ENCODE measurements at regions of chr10 and their contacts with region 1.

Region 1: GRCh38 chr10:102352066-102352715 is 43.3 kb upstream of the NFKB2 start:
- DNase-seq: no peak
- ATAC-seq: peak; percentile 92
- H3K4me3 ChIP-seq: no peak overlapping the region
- H3K27ac ChIP-seq: no peak overlapping the region
- H3K4me1 ChIP-seq: no peaks in the 10 kb centered on the region
- H3K27me3 ChIP-seq: no peaks in the 10 kb centered on the region
- CTCF ChIP-seq: peak; percentile 86 to 95 (median 93)
- EP300 ChIP-seq: no peak
- POLR2A ChIP-seq: no peak
- RAD21 ChIP-seq: peak; percentile 92

Region 2: GRCh38 chr10:102167861-102168260 is 184.3 kb before region 1 on chr10:
- CTCF ChIA-PET with region 1: interaction called, 150 read pairs
- POLR2A ChIA-PET with region 1: interaction called, 4 read pairs
- RAD21 ChIA-PET with region 1: interaction called, 52 read pairs
- SMC1A ChIA-PET with region 1: interaction called, 43 read pairs
- in situ Hi-C with region 1: loop called (anchors 5 kb)
- intact Hi-C with region 1: loop called (anchors 1 kb)
- DNase-seq: no peak
- ATAC-seq: no peak
- H3K4me3 ChIP-seq: no peak overlapping the region
- H3K27ac ChIP-seq: no peak overlapping the region
- H3K4me1 ChIP-seq: peaks cover 4% of the 10 kb centered on the region
- H3K27me3 ChIP-seq: no peaks in the 10 kb centered on the region
- CTCF ChIP-seq: no peak
- EP300 ChIP-seq: no peak
- POLR2A ChIP-seq: no peak
- RAD21 ChIP-seq: no peak

Region 3: DNA sequence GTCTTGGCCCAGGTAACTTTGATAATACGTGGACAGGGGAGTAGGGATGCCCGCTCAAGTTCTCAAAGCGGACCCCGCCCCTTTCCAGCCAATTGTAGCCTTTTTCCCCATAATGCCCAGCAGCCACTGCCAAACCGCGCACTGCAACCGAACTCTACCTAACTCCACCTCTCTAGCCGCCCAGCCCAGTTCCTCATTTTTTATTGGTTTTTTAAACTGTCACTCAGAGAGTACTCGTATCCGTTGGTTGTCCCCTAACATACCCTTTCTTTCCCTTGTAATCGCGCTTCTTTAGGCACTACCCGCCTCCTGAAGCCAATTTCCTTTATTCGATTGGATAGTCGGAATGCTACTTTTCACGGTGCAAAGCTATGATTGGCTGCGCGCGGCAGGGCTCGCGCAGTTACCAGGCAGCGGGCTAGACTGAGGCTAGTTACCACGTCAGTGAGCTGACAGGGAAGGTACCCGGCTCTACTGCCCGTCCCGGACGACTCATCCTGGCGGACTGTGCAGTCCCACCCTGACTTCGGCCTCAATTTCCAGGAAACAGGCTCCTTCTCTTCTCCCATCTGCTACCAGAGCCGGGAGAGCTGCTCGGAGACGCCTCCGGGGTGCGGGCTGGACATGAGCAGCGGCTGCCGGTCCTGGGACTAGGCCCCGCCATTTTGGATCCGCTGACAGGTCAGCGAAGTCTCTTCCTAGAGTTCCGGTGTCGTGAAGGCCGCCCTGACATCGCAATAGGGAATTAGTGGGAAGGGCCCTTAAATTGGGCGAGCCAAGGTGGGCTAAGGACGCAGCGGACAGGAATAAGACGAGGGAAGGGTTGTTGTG is 106.9 kb before region 1 on chr10 and contains the start of gene GBF1:
- CTCF ChIA-PET with region 1: interaction called, 632 read pairs
- POLR2A ChIA-PET with region 1: interaction called, 5 read pairs
- RAD21 ChIA-PET with region 1: interaction called, 14 read pairs
- SMC1A ChIA-PET with region 1: interaction called, 7 read pairs
- in situ Hi-C with region 1: no loop called
- intact Hi-C with region 1: no loop called
- DNase-seq: peak; percentile 100
- ATAC-seq: peak; percentile 94
- H3K4me3 ChIP-seq: peak within 1 kb of the TSS; percentile 86
- H3K27ac ChIP-seq: peak within 1 kb of the TSS; percentile 88
- H3K4me1 ChIP-seq: peaks cover 4% of the 10 kb centered on the region; the same call in 1 of the 2 replicates
- H3K27me3 ChIP-seq: peaks cover 3 to 9% of the 10 kb centered on the region in 2 experiments
- CTCF ChIP-seq: no peak
- EP300 ChIP-seq: 0 out of 4 replicates have a peak, but pooled peaks of 1 of the 2 experiments have one; percentile 13
- POLR2A ChIP-seq: peak; percentile 99
- RAD21 ChIP-seq: no peak
- polyA plus RNA-seq, gene GBF1: 0.82 to 1.2 TPM

Region 4: DNA sequence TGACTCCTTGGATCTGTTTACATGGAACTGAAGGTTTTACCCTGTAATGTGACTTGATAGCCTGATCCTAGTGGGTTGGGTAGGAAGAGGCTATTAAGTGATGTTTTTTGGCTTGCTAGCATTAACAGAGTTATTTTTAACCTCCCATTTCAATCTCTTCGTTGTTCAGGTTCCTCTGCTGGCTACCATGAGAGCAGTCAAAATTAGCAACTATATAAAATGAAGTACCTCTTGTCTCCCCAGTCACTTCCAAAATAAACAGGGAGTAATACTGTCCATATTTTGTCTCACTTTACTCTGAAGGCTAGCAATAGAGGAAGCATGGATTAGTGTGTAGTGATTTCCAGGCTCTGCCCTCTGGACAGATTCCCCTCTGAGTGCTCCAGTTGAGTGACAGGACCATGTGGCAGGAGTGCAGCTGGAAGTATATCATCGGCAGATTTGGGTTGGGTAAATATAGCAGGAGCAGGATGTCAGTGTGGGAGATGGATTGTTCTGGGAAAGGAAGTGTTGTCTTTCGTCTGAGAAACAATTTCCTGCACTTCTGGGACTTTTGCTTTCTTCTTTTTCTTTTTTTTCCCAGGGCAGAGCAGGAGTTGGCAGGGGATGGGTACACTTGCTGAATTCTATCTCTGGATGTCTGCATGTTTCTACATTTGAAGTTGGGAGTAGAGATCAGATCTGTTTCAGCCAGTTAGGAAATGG is 71.6 kb before region 1 on chr10:
- CTCF ChIA-PET with region 1: interaction called, 14 read pairs
- POLR2A ChIA-PET with region 1: no interaction called
- RAD21 ChIA-PET with region 1: no interaction called
- SMC1A ChIA-PET with region 1: interaction called, 4 read pairs
- in situ Hi-C with region 1: no loop called
- intact Hi-C with region 1: no loop called
- DNase-seq: no peak
- ATAC-seq: peak; percentile 44
- H3K4me3 ChIP-seq: peak overlapping the region; percentile 14; the same call in 1 of the 2 replicates
- H3K27ac ChIP-seq: peak overlapping the region; percentile 44
- H3K4me1 ChIP-seq: peaks cover 6% of the 10 kb centered on the region; the same call in 1 of the 2 replicates
- H3K27me3 ChIP-seq: no peaks in the 10 kb centered on the region
- CTCF ChIP-seq: no peak
- EP300 ChIP-seq: no peak
- POLR2A ChIP-seq: no peak
- RAD21 ChIP-seq: no peak

Region 5: GRCh38 chr10:102334101-102334500 is 18.1 kb before region 1 on chr10:
- CTCF ChIA-PET with region 1: interaction called, 37 read pairs
- POLR2A ChIA-PET with region 1: interaction called, 4 read pairs
- RAD21 ChIA-PET with region 1: no interaction called
- SMC1A ChIA-PET with region 1: interaction called, 5 read pairs
- in situ Hi-C with region 1: no loop called
- intact Hi-C with region 1: no loop called
- DNase-seq: no peak
- ATAC-seq: no peak
- H3K4me3 ChIP-seq: no peak overlapping the region
- H3K27ac ChIP-seq: no peak overlapping the region
- H3K4me1 ChIP-seq: no peaks in the 10 kb centered on the region; the same call in 1 of the 2 replicates
- H3K27me3 ChIP-seq: no peaks in the 10 kb centered on the region
- CTCF ChIP-seq: no peak
- EP300 ChIP-seq: no peak
- POLR2A ChIP-seq: no peak
- RAD21 ChIP-seq: no peak

Region 6: DNA sequence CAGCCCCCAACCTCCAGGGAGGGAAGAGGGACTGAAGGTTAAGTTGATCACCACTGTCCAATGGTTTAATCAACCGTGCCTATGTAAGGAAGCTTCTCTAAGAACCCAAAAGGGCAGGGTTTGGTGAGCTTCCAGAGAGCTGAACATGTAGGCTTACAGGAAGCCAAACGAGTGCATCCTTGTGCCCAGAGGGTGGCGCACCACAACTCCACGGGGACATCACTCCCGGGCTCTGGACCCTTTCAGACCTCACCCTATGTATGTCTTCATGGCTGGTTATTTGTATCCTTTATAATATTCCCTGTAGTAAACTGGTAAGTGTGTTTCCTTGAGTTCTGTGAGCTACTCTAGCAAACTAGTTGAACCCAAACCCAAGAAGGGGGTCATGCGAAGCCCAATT is 31.9 kb after region 1 on chr10:
- CTCF ChIA-PET with region 1: interaction called, 19 read pairs
- POLR2A ChIA-PET with region 1: no interaction called
- RAD21 ChIA-PET with region 1: interaction called, 7 read pairs
- SMC1A ChIA-PET with region 1: interaction called, 8 read pairs
- in situ Hi-C with region 1: no loop called
- intact Hi-C with region 1: no loop called
- DNase-seq: no peak
- ATAC-seq: peak; percentile 59
- H3K4me3 ChIP-seq: no peak overlapping the region
- H3K27ac ChIP-seq: no peak overlapping the region
- H3K4me1 ChIP-seq: peaks cover 13% of the 10 kb centered on the region
- H3K27me3 ChIP-seq: no peaks in the 10 kb centered on the region
- CTCF ChIP-seq: peak in 1 of 3 experiments; percentile 26; a peak in 3 of 6 replicates
- EP300 ChIP-seq: no peak
- POLR2A ChIP-seq: no peak
- RAD21 ChIP-seq: no peak

Measured in GM12878 (cell line).